Breast epithelium (tissue), 4 donors: ENCODE measurements at regions of chr20 and their contacts with region 1.

Region 1: DNA sequence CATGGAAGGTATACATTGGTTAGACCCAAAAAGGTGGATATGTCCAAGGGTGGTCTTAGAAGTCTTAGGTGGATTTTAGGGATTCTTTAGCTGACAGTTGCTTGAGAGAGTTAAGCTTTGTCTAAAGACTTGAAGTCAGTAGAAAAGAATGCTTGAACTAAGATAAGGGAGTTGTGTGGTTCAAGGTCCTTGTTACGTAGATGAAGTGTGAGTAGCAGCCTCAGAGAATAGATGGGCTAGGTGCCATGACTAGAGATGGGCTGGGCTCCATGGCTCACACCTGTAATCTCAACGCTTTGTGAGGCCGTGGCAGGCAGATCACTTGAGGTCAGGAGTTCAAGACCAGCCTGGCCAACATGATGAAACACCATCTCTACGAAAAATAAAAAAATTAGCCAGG is 1.7 kb downstream of the SHLD1 start:
- DNase-seq: no peak
- H3K4me3 ChIP-seq: no peak overlapping the region
- H3K27ac ChIP-seq: no peak overlapping the region
- H3K4me1 ChIP-seq: no peaks in the 10 kb centered on the region
- H3K27me3 ChIP-seq: no peaks in the 10 kb centered on the region
- CTCF ChIP-seq: no peak
- POLR2A ChIP-seq: no peak

Region 2: GRCh38 chr20:5780846-5781217 is 29.0 kb after region 1 on chr20:
- intact Hi-C with region 1: loop called (anchors 1 kb)
- DNase-seq: no peak
- H3K4me3 ChIP-seq: no peak overlapping the region
- H3K27ac ChIP-seq: no peak overlapping the region
- H3K4me1 ChIP-seq: peaks cover 0 to 7% of the 10 kb centered on the region in 2 donors
- H3K27me3 ChIP-seq: no peaks in the 10 kb centered on the region
- CTCF ChIP-seq: no peak
- POLR2A ChIP-seq: no peak